ENCODE measurements at regions of chr20 and their contacts with region 1.

Region 1: GRCh38 chr20:20017001-20017843 is at the start of gene NAA20:
- DNase-seq: peak; percentile 95
- ATAC-seq: peak; percentile 93
- H3K4me3 ChIP-seq: peak within 1 kb of the TSS; percentile 90
- H3K27ac ChIP-seq: peak within 1 kb of the TSS; percentile 49
- H3K4me1 ChIP-seq: peaks cover 39% of the 10 kb centered on the region
- H3K27me3 ChIP-seq: no peaks in the 10 kb centered on the region
- CTCF ChIP-seq: peak; percentile 56
- total RNA-seq, gene NAA20: 107 and 113 TPM in 2 replicates

Region 2: DNA sequence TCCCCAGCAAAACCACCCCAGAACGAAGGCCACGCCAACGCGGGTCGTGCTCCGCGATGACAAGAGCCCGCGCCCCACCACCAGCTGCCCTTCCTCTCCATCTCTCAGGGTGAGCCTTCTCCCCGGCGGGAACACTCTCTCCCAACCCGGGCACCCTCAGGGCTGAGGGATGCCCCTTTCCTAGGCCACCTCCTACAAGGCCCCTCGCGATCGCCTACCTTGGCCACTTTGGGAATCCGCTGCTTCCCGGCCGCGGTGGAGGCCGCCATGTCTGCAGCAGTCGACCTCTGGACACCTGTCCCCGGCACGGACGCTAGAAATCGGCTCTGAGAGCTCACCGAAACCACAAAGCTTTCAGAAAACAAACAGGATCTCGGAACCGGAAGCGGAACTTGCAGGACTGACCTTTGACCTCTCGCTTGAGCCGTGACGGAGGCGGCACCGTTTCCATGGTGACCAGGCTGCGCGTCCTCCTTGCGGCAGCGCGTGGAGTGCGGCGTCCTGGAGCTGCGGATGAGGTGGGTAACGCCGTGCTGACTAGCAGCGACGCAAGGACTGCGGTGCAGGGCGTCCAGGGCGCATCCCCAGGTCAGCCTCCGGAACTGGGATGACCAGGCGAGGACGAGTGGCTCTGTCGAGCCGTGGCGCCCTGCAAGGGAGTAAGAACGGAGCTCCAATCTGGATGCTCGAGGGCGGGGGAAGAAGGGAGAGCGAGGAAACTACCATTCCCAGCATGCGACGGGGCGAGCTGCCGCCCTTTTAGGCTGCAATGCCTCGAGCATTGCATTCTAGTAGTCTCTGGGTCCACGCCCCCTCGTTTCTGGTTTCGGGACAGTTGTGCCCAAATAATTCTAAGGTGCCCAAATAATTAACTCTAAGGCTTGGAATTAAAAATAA is 35.1 kb after region 1 on chr20 and contains the starts of genes CFAP61 and CRNKL1:
- CTCF ChIA-PET with region 1: no interaction called
- POLR2A ChIA-PET with region 1: interaction called, 4 read pairs
- intact Hi-C with region 1: loop called (anchors 2 kb)
- DNase-seq: peak; percentile 99
- ATAC-seq: peak; percentile 94
- H3K4me3 ChIP-seq: peak within 1 kb of the TSS; percentile 91
- H3K27ac ChIP-seq: peak within 1 kb of the TSS; percentile 54
- H3K4me1 ChIP-seq: peaks cover 10% of the 10 kb centered on the region
- H3K27me3 ChIP-seq: peaks cover 9% of the 10 kb centered on the region; the same call in 1 of the 2 replicates
- CTCF ChIP-seq: no peak
- total RNA-seq, gene CFAP61: not detected in 2 replicates
- total RNA-seq, gene CRNKL1: 17.2 and 22.5 TPM in 2 replicates